ENCODE measurements at regions of chr4 and their contacts with region 1.

Region 1: DNA sequence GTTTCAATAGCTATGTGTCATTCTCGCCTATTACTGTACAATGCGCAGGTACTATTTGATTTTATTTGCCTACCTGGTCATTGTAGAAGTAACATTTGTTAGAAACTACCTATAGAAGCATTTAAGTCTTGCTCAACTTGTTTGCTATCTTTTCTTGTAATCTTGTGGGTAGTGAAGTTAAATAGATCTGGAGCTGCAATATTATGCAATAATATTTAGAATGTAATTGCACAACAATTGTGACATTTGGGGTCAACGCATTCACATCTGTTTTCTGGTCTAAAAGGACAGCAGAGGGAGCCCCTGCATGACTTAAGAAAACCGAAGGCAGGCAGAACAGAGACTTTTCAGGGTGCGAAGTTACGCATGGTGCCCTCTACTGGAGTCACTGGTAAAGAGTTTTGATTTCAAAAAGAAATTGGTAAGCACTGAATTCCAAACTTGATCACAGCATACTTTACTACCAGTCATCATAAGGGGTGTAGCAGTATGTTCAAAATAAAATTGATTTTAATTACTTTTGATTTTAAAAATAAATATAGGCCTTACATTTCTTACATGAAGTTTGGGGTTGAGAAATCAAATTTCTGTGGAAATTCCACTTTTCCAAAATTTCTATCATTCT is 503.2 kb upstream of the FAM241A start:
- H3K4me3 Mint-ChIP-seq: no peak overlapping the region
- H3K27ac Mint-ChIP-seq: no peak overlapping the region
- H3K4me1 Mint-ChIP-seq: peaks cover 6% of the 10 kb centered on the region
- H3K27me3 Mint-ChIP-seq: peaks cover 5% of the 10 kb centered on the region

Region 2: GRCh38 chr4:110631584-110632505 is 1010.2 kb before region 1 on chr4:
- intact Hi-C with region 1: loop called (anchors 10 kb)
- H3K4me3 Mint-ChIP-seq: peak overlapping the region; percentile 41
- H3K27ac Mint-ChIP-seq: no peak overlapping the region
- H3K4me1 Mint-ChIP-seq: peaks cover 15% of the 10 kb centered on the region
- H3K27me3 Mint-ChIP-seq: peaks cover 91% of the 10 kb centered on the region

Region 3: GRCh38 chr4:111573386-111573785 is 68.7 kb before region 1 on chr4:
- intact Hi-C with region 1: no loop called
- H3K4me3 Mint-ChIP-seq: no peak overlapping the region
- H3K27ac Mint-ChIP-seq: no peak overlapping the region
- H3K4me1 Mint-ChIP-seq: no peaks in the 10 kb centered on the region
- H3K27me3 Mint-ChIP-seq: no peaks in the 10 kb centered on the region

Region 4: DNA sequence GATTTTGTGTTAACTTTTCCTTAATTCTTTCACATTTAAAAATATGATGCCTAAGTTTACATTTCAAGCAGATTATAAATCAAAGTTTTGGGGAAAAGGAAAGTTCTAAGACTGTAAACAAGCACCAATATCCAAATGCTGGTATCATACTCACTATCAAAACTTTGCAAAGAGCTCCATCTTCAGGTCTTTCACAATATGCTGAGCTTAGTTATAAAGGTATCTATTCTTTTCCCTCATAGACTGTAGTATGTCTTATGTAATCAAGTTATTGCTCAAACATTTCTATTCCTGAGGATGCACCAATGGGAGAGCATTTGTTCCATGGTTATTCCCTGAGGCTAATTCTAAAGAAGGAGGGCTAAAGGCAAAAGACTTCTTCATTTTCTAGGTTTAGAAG is 295.3 kb after region 1 on chr4:
- intact Hi-C with region 1: loop called (anchors 2 kb)
- H3K4me3 Mint-ChIP-seq: no peak overlapping the region
- H3K27ac Mint-ChIP-seq: no peak overlapping the region
- H3K4me1 Mint-ChIP-seq: no peaks in the 10 kb centered on the region
- H3K27me3 Mint-ChIP-seq: peaks cover 27% of the 10 kb centered on the region

Region 5: DNA sequence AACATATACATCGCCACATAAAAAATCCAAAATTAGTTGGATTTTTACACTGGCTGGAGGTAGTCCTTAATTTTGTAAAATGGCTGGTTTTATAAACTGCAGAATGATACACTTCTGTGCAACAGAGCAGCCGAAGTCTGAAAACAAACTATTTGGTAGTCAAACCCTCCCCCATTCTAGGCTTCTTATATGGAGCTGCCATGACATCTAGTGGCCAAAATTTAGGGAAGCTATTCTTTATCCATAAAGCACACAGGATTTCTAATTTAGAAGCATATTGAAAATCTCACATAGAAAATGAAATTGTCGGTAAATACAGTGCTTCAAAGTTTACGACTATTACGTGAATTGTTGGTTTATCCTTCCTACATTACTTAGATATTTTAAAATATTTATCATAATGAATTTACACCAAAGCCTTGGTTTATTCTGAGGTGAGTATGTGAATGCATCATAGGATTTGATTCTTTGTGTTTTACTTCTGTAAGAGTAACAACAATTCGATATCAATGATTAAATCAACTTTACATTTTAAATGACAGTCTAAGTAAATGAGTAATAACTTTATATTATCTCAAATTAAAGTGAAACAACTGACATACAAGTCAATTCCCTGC is 389.8 kb after region 1 on chr4:
- intact Hi-C with region 1: loop called (anchors 2 kb)
- H3K4me3 Mint-ChIP-seq: no peak overlapping the region
- H3K27ac Mint-ChIP-seq: no peak overlapping the region
- H3K4me1 Mint-ChIP-seq: no peaks in the 10 kb centered on the region
- H3K27me3 Mint-ChIP-seq: peaks cover 26% of the 10 kb centered on the region

Measured in dendritic cell treated with granulocyte-macrophage colony-stimulating factor and Interleukin-4, amounts not matched to agents 40 ng/mL and 50 ng/mL, for 4 days (primary cell).